ENCODE measurements at regions of chr15 and their contacts with region 1.

Region 1: GRCh38 chr15:52783929-52784798 is 6.0 kb downstream of the ONECUT1 start:
- DNase-seq: peak; percentile 81
- H3K4me3 ChIP-seq: peak overlapping the region in 1 of 2 experiments; percentile 50; a peak in 1 of 4 replicates
- H3K27ac ChIP-seq: no peak overlapping the region
- H3K4me1 ChIP-seq: peaks cover 0 to under 1% of the 10 kb centered on the region in 2 experiments; a peak in 1 of 4 replicates
- H3K27me3 ChIP-seq: peaks cover 85% of the 10 kb centered on the region
- CTCF ChIP-seq: peak; percentile 57
- EP300 ChIP-seq: no peak
- RAD21 ChIP-seq: peak; percentile 25; the same call in 1 of the 2 replicates

Region 2: GRCh38 chr15:52765785-52766184 is 18.4 kb before region 1 on chr15:
- CTCF ChIA-PET with region 1: interaction called, 11 read pairs
- POLR2A ChIA-PET with region 1: no interaction called
- DNase-seq: no peak
- H3K4me3 ChIP-seq: no peak overlapping the region
- H3K27ac ChIP-seq: no peak overlapping the region
- H3K4me1 ChIP-seq: no peaks in the 10 kb centered on the region
- H3K27me3 ChIP-seq: peaks cover 38% of the 10 kb centered on the region
- CTCF ChIP-seq: peak; percentile 36
- EP300 ChIP-seq: no peak
- RAD21 ChIP-seq: no peak

Region 3: GRCh38 chr15:52819253-52819652 is 35.1 kb after region 1 on chr15:
- CTCF ChIA-PET with region 1: no interaction called
- POLR2A ChIA-PET with region 1: no interaction called
- DNase-seq: no peak
- H3K4me3 ChIP-seq: no peak overlapping the region
- H3K27ac ChIP-seq: no peak overlapping the region
- H3K4me1 ChIP-seq: no peaks in the 10 kb centered on the region
- H3K27me3 ChIP-seq: peaks cover 6% of the 10 kb centered on the region; the same call in 1 of the 2 replicates
- CTCF ChIP-seq: no peak
- EP300 ChIP-seq: no peak
- RAD21 ChIP-seq: no peak

Region 4: DNA sequence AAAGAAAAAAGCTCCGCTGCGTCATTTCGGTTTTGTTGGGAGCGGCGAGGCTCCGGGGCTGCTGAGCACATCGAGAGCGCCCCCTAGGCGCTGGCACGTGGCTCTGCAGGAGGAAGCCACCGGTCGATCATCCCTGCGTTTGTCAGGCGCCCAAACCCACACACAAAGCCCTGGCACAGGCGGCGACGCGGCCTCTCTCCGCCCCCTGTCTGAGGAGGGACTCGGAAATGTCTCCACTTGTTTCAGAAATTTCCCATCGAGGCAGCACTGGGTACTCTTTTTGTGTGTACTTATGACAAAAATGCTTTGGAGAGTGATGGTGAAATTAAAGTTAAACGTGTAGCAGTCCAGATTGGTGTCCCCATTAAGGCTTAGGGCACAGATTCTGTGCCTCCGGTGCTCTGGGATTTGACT is 413.3 kb after region 1 on chr15:
- CTCF ChIA-PET with region 1: interaction called, 14 read pairs
- POLR2A ChIA-PET with region 1: no interaction called
- DNase-seq: peak; percentile 75
- H3K4me3 ChIP-seq: peak overlapping the region in 1 of 2 experiments; percentile 35; a peak in 1 of 4 replicates
- H3K27ac ChIP-seq: no peak overlapping the region
- H3K4me1 ChIP-seq: no peaks in the 10 kb centered on the region; a peak in 1 of 4 replicates
- H3K27me3 ChIP-seq: peaks cover 11% of the 10 kb centered on the region; the same call in 1 of the 2 replicates
- CTCF ChIP-seq: peak; percentile 92
- EP300 ChIP-seq: no peak
- RAD21 ChIP-seq: peak; percentile 72